Activated naive CD4-positive, alpha-beta T cell treated with anti-CD3 and anti-CD28 coated beads for 36 hours (primary cell): ENCODE measurements at regions of chr14 and their contacts with region 1.

Region 1: GRCh38 chr14:81153187-81153586 is 67.6 kb downstream of the GTF2A1 start:
- DNase-seq: peak; percentile 31
- H3K4me3 Mint-ChIP-seq: no peak overlapping the region
- H3K27ac Mint-ChIP-seq: no peak overlapping the region
- H3K4me1 Mint-ChIP-seq: peaks cover 18% of the 10 kb centered on the region
- H3K27me3 Mint-ChIP-seq: peaks cover 10% of the 10 kb centered on the region

Region 2: DNA sequence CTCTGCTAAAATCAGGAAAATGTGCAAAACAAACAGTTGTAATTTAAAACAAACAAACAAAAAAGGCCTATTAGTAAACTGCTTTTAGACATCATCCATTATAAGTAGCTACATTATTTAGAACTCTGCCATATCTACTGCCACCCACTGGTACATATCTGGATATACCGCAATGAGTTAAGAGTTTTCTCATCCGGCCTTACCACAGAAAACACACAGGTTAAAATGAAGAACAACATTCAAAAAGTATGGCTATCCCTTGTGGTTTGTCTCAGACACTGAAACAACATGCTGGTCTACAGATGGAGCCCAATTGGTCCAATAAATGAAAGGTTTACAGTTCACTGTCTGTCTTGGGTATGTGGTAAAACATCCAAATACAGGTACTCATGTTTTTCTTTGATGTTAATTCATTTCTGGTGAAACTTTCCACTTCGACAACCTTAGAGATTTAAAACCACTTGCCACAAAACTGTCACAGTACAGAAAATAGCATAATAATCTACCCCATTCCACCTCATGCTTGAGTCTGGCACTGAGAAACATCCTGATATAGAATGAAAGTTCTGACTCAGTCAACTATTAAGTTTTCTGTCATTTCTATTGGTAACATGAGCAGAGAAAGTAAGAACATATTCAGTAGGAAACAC is 566.0 kb before region 1 on chr14:
- CTCF ChIA-PET with region 1: no interaction called
- intact Hi-C with region 1: loop called (anchors 1 kb)
- DNase-seq: peak; percentile 9
- H3K4me3 Mint-ChIP-seq: no peak overlapping the region
- H3K27ac Mint-ChIP-seq: peak overlapping the region; percentile 39
- H3K4me1 Mint-ChIP-seq: peaks cover 14% of the 10 kb centered on the region
- H3K27me3 Mint-ChIP-seq: no peaks in the 10 kb centered on the region

Region 3: GRCh38 chr14:81164167-81164774 is 11.1 kb after region 1 on chr14:
- CTCF ChIA-PET with region 1: interaction called, 3 read pairs
- intact Hi-C with region 1: loop called (anchors 1 kb)
- DNase-seq: peak; percentile 87
- H3K4me3 Mint-ChIP-seq: no peak overlapping the region
- H3K27ac Mint-ChIP-seq: no peak overlapping the region
- H3K4me1 Mint-ChIP-seq: peaks cover 10% of the 10 kb centered on the region
- H3K27me3 Mint-ChIP-seq: no peaks in the 10 kb centered on the region

Region 4: GRCh38 chr14:81187832-81188522 is 34.8 kb after region 1 on chr14:
- CTCF ChIA-PET with region 1: no interaction called
- intact Hi-C with region 1: no loop called
- DNase-seq: no peak
- H3K4me3 Mint-ChIP-seq: no peak overlapping the region
- H3K27ac Mint-ChIP-seq: no peak overlapping the region
- H3K4me1 Mint-ChIP-seq: peaks cover 39% of the 10 kb centered on the region
- H3K27me3 Mint-ChIP-seq: no peaks in the 10 kb centered on the region